Prostate gland (tissue), 2 donors: ENCODE measurements at regions of chr18 and their contacts with region 1.

Region 1: GRCh38 chr18:23416298-23416697 is 36.8 kb upstream of the RIOK3 start:
- DNase-seq: no peak
- H3K4me3 ChIP-seq: no peak overlapping the region
- H3K27ac ChIP-seq: no peak overlapping the region
- H3K4me1 ChIP-seq: no peaks in the 10 kb centered on the region
- H3K27me3 ChIP-seq: no peaks in the 10 kb centered on the region
- CTCF ChIP-seq: no peak
- POLR2A ChIP-seq: no peak

Region 2: GRCh38 chr18:22790545-22791309 is 625.6 kb before region 1 on chr18:
- intact Hi-C with region 1: loop called (anchors 10 kb)
- DNase-seq: no peak
- H3K4me3 ChIP-seq: no peak overlapping the region
- H3K27ac ChIP-seq: no peak overlapping the region
- H3K4me1 ChIP-seq: no peaks in the 10 kb centered on the region
- H3K27me3 ChIP-seq: no peaks in the 10 kb centered on the region
- CTCF ChIP-seq: no peak
- POLR2A ChIP-seq: no peak

Region 3: DNA sequence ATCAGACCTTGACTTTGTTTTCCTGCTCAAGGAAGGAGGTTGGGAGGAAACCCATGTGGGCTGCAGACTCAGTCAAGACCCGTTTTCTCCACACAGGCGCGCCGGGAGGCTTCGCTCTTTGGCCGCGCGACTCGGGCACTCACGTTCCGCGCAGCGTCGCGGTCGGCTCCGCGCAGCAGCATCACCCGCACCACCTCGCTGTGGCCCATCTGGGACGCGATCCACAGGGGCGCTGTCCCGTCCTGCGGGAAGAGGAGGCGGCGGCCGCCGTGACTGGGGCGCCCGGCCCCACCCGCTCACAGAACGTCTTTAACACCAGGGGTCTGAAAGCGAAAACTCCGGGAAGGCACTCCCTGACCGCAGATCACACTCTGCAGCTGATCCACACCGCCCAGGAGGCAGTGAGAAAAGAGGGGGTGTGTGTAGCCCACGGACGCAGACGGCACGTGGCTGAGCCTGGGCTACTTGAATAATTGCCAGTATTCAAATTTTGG is 203.1 kb after region 1 on chr18:
- intact Hi-C with region 1: no loop called
- DNase-seq: no peak
- H3K4me3 ChIP-seq: peak overlapping the region; percentile 29 to 38
- H3K27ac ChIP-seq: peak overlapping the region; percentile 73 to 74
- H3K4me1 ChIP-seq: no peaks in the 10 kb centered on the region
- H3K27me3 ChIP-seq: no peaks in the 10 kb centered on the region
- CTCF ChIP-seq: peak in 1 of 4 experiments; percentile 6
- POLR2A ChIP-seq: no peak